Right ventricle myocardium inferior (tissue), 1 donor: ENCODE measurements at regions of chr10 and their contacts with region 1.

Region 1: GRCh38 chr10:16601881-16602775 is 80.4 kb upstream of the C1QL3 start:
- DNase-seq: no peak
- ATAC-seq: no peak

Region 2: DNA sequence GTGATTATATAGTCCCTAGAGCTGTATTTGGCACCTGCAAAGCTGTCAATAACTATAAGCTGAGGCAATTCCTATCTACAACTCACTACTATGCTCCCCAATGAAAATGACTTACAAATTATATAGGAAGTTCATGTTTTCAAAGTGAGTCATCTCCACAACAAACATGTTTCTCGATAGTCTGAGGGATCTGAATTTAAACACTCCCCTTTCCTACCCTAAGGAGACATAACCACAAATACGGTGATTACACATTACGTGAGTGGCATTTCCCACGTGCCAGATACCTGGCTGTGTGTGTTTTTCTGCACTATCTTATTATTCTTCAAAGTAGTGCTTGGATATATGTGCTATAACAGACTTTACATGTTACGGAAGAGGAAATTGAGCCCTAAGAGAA is 42.0 kb after region 1 on chr10:
- intact Hi-C with region 1: no loop called
- DNase-seq: no peak
- ATAC-seq: no peak

Region 3: GRCh38 chr10:16699435-16700057 is 97.4 kb after region 1 on chr10:
- intact Hi-C with region 1: no loop called
- DNase-seq: no peak
- ATAC-seq: no peak

Region 4: GRCh38 chr10:16792675-16793074 is 190.5 kb after region 1 on chr10:
- intact Hi-C with region 1: loop called (anchors 5 kb)
- DNase-seq: no peak
- ATAC-seq: peak; percentile 87